Astrocyte of the cerebellum (primary cell): ENCODE measurements at regions of chr5 and their contacts with region 1.

Region 1: DNA sequence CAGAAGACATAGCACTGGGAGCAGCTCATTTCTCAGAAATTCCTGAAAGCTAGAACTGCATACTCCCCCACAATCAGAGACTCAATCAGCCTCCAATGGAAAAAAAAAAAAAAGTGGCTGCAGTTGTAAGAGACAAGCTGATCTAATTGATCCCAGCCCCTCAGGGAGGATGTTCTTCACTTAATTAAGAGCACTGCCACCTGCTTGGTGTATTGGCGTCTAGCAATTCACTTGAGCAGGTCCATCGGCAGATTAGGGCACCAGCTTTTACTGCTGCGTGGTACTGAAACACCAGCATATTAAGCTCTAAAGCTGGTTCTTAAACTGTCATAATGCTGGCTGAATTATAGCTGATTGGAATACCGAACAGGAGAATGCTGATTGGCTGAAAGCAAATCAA is 1890.1 kb upstream of the WWC1 start:
- DNase-seq: no peak
- H3K4me3 ChIP-seq: no peak overlapping the region
- CTCF ChIP-seq: no peak

Region 2: DNA sequence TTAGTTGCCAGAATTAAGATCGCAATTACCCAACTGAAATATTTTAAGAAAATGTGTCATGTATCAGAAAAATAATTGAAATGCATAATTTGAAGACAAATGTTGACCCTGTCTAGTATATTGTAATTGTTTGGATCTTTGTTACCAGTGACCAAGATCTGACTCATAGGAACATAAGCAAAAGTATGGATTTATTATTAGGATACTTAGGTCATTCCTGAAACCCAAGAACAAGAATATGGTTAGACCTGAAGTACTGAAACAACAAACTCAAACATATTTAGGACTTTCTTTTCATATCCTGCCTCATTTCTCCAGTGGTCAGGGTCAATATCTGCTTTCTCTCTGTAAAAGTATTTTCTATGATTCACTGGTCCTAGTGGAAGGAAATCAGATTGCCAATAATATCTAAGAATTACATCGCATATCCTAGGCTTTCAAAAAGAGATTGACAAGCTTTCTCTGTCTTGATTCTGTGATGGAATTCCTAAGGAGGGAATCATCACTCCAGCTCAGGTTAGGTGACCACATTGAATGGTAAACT is 47.0 kb before region 1 on chr5:
- in situ Hi-C with region 1: loop called (anchors 5 kb)
- DNase-seq: no peak
- H3K4me3 ChIP-seq: no peak overlapping the region
- CTCF ChIP-seq: no peak

Region 3: DNA sequence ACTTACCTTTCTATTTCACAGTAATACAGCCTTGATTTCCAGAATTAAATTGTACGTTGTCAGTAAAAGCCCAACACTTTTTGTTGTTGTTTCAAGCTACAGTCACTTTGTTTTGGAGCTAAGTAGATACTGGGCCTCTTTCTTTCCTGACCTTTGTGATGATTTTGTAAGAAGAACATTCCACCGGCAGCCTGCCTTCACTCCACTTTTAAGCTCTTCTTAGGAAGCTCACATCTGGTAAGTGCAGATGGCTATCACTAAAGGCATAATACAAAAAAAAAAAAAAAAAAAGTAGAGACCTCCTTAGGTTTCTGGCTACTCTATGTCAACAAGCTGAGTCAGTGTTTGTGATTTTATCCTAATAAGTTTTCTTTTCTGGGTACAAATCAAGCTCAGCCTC is 32.1 kb before region 1 on chr5:
- in situ Hi-C with region 1: no loop called
- DNase-seq: no peak
- H3K4me3 ChIP-seq: no peak overlapping the region
- CTCF ChIP-seq: no peak

Region 4: DNA sequence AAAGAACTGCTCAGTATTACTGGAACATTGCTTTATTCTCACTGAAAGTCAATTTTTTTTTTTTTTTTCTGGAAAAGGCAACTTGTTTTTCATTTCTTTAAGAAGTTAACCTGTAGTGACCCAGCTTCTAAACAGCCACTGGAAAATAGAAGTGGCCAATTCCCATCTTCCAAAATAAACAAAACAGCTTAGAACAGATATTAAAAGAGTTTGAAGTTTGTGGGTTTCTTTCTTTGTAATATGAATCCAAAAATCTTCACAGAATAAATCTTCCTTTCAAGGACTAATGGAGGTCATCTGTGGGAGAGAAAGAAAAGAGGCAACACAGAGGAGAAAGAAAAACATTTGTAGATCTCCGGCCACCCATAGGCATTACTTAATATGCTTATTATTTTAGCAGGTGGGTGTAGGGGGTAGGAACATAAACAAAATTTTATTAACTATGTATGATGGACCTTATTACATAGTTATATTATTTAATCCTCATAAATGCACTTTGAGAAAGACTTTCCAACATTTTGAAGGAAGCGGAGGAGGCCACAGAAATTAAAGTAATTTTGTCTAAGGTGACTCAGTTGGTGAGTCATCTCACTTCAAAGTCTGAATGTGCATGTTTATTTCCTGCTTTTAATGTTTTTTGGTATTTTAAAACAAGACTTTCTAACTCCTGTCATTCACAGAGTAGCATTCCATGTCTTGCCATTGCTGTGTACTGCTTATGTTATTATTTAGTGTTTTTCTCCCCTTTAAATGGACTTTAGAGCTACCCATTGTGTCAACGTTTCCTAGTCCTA is 98.3 kb after region 1 on chr5:
- in situ Hi-C with region 1: no loop called
- DNase-seq: peak; percentile 19
- H3K4me3 ChIP-seq: no peak overlapping the region
- CTCF ChIP-seq: no peak